Prostate gland (tissue), 2 donors: ENCODE measurements at regions of chr16 and their contacts with region 1.

Region 1: DNA sequence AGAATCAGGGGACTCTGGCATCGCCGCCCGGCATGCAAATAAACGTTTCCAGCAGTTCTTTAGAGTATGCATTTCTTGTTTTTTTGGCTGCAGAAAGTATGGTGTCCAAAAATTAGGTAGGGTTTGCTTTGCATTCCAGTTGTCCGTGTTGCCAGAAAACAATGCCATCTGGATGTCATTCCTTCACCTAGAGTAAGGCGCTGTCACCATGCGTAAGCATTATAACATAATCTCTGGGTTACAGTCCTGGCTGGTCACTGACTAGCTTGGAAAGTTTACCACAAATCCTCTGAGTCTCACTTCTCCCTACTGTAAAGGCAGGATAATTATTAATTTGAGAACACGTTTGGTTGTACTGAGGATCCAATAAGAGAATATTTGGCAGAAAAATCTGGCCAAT is 457.7 kb downstream of the XYLT1 start:
- DNase-seq: no peak
- H3K4me3 ChIP-seq: no peak overlapping the region
- H3K27ac ChIP-seq: no peak overlapping the region
- H3K4me1 ChIP-seq: no peaks in the 10 kb centered on the region
- H3K27me3 ChIP-seq: no peaks in the 10 kb centered on the region
- CTCF ChIP-seq: no peak
- POLR2A ChIP-seq: no peak

Region 2: DNA sequence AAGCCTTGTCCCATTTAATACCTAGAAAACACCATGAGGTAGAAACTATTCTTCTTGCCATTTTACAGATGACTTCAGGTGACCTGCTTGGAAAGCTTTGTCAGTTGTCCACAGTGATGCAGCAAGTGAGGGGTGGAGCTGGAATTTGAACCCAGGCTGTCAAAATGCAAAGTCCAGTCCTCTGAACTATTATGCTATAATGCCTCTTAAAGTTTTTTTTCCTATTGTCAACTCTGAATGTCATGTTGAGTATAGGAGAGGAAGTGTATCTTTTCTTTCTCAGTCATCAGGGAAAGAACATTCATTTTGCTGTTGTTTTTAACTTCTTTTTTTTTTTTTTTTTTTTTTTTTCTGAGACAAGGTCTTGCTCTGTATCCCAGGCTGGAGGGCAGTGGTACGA is 67.8 kb before region 1 on chr16:
- intact Hi-C with region 1: loop called (anchors 5 kb)
- DNase-seq: no peak
- H3K4me3 ChIP-seq: no peak overlapping the region
- H3K27ac ChIP-seq: no peak overlapping the region
- H3K4me1 ChIP-seq: no peaks in the 10 kb centered on the region
- H3K27me3 ChIP-seq: no peaks in the 10 kb centered on the region
- CTCF ChIP-seq: no peak
- POLR2A ChIP-seq: no peak